ENCODE measurements at regions of chr1 and their contacts with region 1.

Region 1: DNA sequence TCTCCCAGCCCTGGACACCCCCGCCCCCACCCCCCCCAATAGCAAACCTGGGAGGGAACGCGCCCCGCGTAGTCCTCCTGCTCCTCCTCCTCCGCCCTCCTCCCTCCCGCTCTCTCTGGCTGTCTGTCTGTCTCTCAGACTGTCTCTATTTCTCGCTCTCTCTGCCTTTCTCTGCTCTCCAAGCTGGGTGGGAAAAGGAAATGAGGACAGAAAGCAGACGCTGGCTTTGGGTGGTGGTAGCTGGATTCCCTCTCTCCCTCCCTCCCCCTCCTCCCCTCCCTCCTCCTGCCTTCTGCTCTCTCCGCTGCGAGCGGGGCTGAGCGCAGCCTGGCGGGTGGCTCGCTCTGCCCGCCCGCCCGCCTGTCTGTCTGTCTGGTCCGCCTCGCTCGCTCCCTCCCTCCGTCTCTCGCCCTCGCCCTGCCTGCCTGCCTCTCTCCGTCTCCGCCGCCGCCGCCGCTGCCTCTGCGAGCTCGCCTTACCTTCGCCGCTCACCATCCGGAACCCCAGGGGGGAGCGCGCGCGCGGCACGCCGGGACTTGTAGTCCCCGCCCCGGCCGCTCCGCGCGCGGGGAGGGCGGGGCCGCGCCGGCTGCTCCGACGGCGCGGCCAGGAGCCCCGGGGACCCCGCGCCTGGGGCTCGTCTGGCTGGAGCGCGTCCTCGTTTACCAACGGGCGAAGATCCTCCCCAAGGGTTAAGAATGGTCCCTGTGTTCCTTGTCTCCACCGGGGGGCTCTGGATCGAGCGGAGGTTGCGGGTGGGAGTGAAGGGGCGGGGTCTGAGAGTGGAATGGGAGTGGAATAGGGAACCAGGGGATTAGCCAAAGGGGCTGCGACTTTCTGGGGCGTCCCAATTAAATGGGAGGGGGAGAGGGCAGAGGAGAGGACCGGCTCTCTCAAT is at the start of gene AHDC1:
- DNase-seq: peak; percentile 89
- H3K4me3 Mint-ChIP-seq: peak within 1 kb of the TSS; percentile 89
- H3K27ac Mint-ChIP-seq: peak within 1 kb of the TSS; percentile 89
- H3K4me1 Mint-ChIP-seq: peaks cover 38% of the 10 kb centered on the region
- H3K27me3 Mint-ChIP-seq: peaks cover 2% of the 10 kb centered on the region
- total RNA-seq, gene AHDC1: 33.7 and 33.9 TPM in 2 replicates

Region 2: GRCh38 chr1:26921540-26922430 is 682.1 kb before region 1 on chr1 and contains the start of gene NUDC:
- intact Hi-C with region 1: loop called (anchors 5 kb)
- DNase-seq: peak; percentile 97
- H3K4me3 Mint-ChIP-seq: peak within 1 kb of the TSS; percentile 97
- H3K27ac Mint-ChIP-seq: peak within 1 kb of the TSS; percentile 96
- H3K4me1 Mint-ChIP-seq: peaks cover 31% of the 10 kb centered on the region
- H3K27me3 Mint-ChIP-seq: peaks cover 2% of the 10 kb centered on the region
- total RNA-seq, gene NUDC: 151 and 152 TPM in 2 replicates

Region 3: DNA sequence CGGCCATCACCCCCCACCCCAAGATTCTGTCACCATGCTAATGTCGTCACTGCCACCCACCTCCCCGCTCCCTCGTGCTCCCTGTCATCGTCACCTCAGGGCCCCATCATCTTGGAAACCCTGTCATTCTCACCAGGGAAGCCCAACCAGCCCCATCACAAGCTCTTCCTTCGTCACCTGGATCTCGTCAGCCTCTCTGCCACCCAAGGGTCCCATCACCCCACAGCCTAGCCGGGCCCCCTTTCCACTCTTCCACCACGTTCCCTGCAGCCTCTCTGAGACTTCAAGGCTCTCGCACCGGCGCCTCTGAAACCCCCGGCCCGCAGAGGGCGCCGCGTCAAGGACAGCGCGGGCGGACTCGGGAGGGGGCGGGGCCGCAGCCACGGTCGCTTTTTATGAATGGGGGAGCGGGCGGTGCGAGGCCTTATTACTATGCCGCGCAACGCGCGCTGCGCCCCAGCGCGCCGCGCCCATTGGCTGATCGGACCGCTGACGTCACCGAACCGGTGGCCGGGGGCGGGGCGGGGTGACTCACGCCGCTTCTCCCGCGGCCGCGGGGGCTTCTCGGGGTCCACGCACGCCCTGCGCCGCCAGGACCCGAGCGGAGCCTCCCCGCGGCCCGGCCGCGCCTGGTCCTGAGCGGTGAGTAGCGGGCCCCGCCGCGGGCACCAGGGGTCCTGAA is 211.7 kb before region 1 on chr1 and contains the start of gene GPR3:
- intact Hi-C with region 1: loop called (anchors 1 kb)
- DNase-seq: peak; percentile 91
- H3K4me3 Mint-ChIP-seq: peak within 1 kb of the TSS; percentile 82
- H3K27ac Mint-ChIP-seq: peak within 1 kb of the TSS; percentile 93
- H3K4me1 Mint-ChIP-seq: peaks cover 12% of the 10 kb centered on the region
- H3K27me3 Mint-ChIP-seq: peaks cover 12% of the 10 kb centered on the region
- total RNA-seq, gene GPR3: 3.2 and 4.0 TPM in 2 replicates

Region 4: DNA sequence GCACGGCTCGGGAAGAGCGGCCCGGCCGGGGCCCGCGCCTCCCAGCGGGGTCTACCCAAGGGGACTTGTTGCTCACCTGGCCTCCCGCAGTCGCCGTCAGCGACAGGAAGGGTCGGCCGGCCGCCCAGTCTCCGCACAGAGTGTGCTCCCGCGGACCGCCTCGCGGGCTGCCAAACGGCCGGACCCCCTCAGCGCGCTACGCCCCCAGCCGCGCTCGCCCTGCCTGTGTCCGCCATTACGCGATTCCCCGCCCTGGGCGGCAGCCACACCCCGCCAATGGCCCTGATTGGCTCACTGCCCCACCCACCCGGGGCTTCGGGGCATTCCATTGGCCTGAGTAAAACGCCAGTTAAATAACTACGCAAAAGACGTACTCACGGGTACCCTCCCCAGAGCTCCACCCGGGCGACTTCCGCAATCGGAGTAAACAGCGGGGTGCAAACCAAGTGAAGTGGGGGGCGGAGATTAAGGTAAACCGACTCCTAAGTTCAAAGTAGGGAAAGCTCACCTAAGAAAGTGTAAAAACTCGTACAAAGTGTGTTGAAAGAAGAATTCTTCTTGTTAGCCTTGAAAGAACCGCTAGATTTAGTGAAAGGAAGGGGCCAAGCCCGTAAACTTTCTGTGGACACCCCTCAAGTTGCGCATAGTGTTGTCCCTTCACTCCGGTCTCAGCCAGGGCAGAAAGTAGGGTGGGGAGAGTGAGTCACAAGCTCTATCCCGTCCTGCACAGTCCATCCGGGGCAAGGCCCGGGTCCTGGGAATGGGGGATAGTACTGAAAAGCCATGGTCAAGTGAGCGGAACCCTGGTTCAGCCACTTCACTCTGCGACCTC is 113.8 kb before region 1 on chr1 and contains the start of gene WASF2:
- intact Hi-C with region 1: loop called (anchors 1 kb)
- DNase-seq: peak; percentile 96
- H3K4me3 Mint-ChIP-seq: peak within 1 kb of the TSS; percentile 96
- H3K27ac Mint-ChIP-seq: peak within 1 kb of the TSS; percentile 98
- H3K4me1 Mint-ChIP-seq: peaks cover 28% of the 10 kb centered on the region
- H3K27me3 Mint-ChIP-seq: no peaks in the 10 kb centered on the region
- total RNA-seq, gene WASF2: 108 and 109 TPM in 2 replicates

Region 5: DNA sequence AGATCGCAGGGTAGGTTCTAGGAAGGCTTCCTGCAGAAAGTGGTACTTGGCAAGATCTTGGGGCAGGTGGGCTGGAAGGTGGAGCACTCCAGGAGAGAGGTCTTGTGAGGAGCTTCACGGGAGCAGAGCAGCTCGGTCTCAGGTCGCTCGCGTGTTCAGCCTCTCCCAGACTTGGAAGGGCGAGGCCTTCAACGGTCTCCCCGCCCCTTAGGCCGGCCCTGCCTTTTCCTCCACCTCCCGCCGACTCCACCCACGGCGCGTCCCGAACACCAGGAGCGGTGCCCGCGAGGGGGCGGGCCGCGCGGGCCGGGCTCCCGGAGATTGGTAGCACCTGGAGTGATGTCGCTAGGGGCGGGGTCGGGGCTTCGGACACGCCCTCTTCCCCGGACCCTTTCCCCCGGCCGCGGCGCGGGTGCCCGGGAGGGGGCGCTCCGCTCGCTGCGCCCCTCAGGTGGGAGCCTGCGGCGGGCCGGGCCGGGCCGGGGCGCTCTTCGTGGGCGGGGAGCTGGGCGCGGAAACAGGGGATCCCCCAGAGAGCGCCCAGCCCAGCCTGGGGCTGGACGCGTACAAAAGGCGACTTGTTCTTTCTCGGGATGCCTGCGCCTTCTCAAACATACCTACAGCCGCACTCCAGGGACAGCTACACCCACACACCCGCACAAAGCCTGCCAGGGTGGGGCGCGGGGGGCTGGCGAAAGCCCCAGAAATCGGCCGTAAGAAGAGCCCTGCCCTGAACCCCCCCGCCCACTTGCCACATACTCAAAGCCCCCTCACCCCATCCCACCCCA is 35.4 kb before region 1 on chr1:
- intact Hi-C with region 1: loop called (anchors 1 kb)
- DNase-seq: peak; percentile 94
- H3K4me3 Mint-ChIP-seq: peak overlapping the region; percentile 67
- H3K27ac Mint-ChIP-seq: no peak overlapping the region
- H3K4me1 Mint-ChIP-seq: peaks cover 18% of the 10 kb centered on the region
- H3K27me3 Mint-ChIP-seq: no peaks in the 10 kb centered on the region

Region 6: DNA sequence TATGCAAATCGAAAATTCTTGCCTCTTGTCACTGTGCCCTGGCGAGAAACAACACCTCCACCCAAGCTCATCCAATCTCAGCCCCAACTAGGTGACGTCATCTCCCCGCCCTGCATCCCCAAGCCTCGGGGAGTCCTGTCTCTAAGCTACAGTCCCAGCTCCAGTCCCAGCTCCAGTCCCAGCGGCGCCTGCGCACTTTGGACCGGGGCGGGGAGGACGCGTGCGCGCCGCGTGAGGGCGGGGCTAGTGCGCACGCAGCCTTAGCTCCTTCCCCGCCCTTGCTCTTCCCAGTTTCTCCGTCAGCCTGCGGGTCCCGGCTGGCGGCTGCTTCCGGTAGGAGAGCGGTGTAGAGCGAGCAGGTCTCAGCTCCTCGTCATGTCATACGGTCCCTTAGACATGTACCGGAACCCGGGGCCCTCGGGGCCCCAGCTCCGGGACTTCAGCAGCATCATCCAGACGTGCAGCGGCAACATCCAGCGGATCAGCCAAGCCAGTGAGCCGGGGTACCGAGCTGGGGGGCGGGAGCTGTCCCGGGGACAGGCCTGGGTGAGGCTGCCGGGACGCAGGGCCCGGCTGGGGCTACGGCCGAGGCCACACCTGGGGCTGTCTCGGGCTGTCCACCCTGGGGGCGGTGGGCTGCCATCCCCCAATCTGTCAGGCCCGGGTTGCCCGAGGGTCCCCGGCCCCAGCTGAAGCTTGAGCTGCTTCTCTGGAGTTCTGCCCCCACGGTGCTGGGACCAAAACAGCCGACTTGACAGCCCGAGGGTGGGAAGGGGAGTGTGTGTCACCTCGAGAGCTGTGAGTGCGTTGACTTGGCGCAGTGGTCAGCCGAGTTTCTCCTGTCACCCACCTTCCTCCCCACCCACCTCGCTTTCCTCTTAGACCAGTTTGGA is 169.2 kb after region 1 on chr1 and contains the start of gene STX12:
- intact Hi-C with region 1: loop called (anchors 2 kb)
- DNase-seq: peak; percentile 99
- H3K4me3 Mint-ChIP-seq: peak within 1 kb of the TSS; percentile 98
- H3K27ac Mint-ChIP-seq: peak within 1 kb of the TSS; percentile 98
- H3K4me1 Mint-ChIP-seq: peaks cover 31% of the 10 kb centered on the region
- H3K27me3 Mint-ChIP-seq: no peaks in the 10 kb centered on the region
- total RNA-seq, gene STX12: 22.0 and 23.9 TPM in 2 replicates